ENCODE measurements at regions of chr11 and their contacts with region 1.

Region 1: DNA sequence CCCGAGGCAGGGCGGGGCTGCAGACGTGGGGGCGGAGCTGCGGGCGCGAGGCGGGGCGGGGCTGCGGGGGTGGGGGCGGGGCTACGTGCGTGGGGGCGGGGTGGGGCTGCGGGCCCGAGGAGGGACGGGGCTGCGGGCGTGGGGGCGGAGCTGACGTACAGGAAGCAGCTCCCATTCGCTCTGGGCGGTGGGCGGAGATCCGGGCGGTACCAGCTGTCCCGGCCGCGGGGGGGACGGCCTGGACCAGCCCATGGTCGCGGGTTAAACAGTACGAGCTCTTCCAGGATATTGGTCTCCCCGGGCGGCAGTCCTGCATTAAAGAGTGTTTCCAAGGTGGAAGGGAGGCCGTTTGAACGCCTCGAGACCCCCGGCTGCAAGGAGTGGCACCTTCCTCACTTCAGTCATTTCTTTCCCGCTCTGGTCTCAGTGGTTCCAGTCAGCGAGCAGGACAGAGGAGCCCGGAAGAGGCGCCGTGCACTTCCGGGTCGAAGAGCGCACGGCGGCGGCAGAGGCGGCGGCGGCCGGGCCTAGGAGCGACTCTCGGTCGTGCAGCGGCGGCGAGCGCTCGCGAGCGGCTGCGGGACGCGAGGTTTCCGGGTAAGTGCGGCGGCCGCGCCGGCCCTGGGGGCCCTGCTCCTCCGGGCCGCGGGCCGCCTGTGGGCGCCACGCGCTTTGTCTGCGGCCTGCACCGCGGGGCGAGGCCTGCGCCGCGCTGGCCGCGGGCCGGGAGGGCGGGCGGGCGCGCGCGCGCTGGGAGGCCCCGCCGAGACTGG is at the start of gene PHRF1:
- DNase-seq: peak; percentile 91 to 97 (median 96)
- H3K4me3 ChIP-seq: peak within 1 kb of the TSS; percentile 91
- H3K4me3 Mint-ChIP-seq: peak within 1 kb of the TSS; percentile 95 to 99 (median 97)
- H3K27ac ChIP-seq: peak within 1 kb of the TSS; percentile 81
- H3K27ac Mint-ChIP-seq: peak within 1 kb of the TSS; percentile 95 to 99 (median 98)
- H3K4me1 ChIP-seq: peaks cover 40% of the 10 kb centered on the region
- H3K4me1 Mint-ChIP-seq: peaks cover 40 to 56% (median 51%) of the 10 kb centered on the region in 3 donors
- H3K27me3 ChIP-seq: no peaks in the 10 kb centered on the region
- H3K27me3 Mint-ChIP-seq: peaks cover 8% of the 10 kb centered on the region in 2 donors
- total RNA-seq, gene PHRF1: 47.3 to 49.8 TPM

Region 2: DNA sequence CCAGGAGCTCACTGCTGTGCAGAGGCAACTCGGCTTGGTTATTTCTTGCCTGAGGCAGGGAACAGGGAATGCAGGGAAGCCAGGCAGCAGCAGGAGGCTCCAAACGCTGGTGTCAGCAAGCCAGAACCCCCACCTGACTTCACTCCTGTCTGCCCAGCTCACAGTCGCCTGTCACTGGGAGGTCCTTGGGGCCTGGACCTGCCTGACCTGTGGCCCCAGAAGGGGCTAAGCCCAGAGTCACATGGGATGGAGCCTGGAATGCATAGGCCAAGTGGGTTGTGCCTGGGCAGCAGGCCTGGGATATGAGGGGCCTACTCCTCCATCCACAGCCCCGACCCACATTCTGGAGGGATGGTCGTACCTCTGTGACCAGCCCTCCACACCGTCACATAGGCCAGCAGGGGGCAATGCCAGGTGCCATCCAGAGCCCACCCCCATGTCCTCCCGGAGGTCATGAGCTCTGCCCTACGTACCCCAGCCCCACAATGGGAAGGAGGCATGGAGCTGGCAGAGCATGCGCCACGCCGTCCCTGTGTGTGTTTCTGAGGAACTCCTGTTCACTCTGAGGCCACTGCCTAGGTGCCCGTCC is 10.2 kb before region 1 on chr11:
- CTCF ChIA-PET with region 1: interaction called, 11 read pairs
- POLR2A ChIA-PET with region 1: interaction called, 5 read pairs
- DNase-seq: no peak
- H3K4me3 ChIP-seq: no peak overlapping the region
- H3K4me3 Mint-ChIP-seq: peak overlapping the region in 1 of 7 donors; percentile 74
- H3K27ac ChIP-seq: no peak overlapping the region
- H3K27ac Mint-ChIP-seq: no peak overlapping the region
- H3K4me1 ChIP-seq: peaks cover 19% of the 10 kb centered on the region
- H3K4me1 Mint-ChIP-seq: peaks cover 5 to 18% (median 7%) of the 10 kb centered on the region in 3 donors
- H3K27me3 ChIP-seq: no peaks in the 10 kb centered on the region
- H3K27me3 Mint-ChIP-seq: peaks cover 0 to 2% of the 10 kb centered on the region in 2 donors

Region 3: DNA sequence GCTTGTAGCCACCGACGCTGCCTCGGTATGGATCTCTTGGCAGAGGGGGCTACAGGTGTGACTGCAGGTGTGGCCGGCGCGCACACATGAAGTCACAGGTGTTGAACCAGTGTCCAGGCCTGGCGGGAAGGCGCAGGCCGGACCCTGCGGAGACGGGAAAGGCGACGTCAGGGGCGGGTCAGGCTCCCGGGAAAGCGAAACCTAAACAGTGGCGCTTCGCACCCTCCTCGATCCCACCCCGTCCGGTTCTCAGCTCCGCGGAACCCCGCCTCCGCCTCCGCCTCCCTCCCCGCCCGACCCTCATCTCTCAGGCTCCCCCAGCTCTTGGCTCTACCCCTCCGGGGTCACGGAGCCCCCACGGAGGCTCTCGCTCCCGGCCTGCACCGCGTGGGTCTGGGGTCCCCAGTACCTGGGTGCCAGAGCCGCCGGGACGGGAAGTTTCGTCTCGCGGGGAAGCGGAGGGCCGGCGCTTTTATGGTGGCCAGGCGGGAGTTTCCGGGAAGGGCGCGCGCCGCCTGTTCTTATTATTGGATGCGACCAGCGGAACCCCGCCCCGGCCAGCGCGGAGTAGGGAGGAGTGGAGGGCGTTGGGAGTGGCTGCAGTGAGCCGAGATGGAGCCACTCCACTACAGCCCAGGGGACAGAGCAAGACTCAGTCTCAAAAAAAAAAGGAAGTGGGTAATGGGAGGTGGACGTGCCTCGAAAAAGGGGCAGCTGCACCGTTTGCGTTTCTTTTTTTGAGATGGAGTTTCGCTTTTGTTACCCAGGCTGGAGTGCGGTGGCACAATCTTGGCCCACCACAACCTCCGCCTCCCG is 39.5 kb after region 1 on chr11 and contains the start of gene IRF7:
- CTCF ChIA-PET with region 1: interaction called, 3 read pairs
- POLR2A ChIA-PET with region 1: interaction called, 11 read pairs
- DNase-seq: peak; percentile 81 to 89 (median 86)
- H3K4me3 ChIP-seq: peak within 1 kb of the TSS; percentile 90
- H3K4me3 Mint-ChIP-seq: peak within 1 kb of the TSS; percentile 88 to 97 (median 93)
- H3K27ac ChIP-seq: peak within 1 kb of the TSS; percentile 87
- H3K27ac Mint-ChIP-seq: peak within 1 kb of the TSS; percentile 86 to 98 (median 92)
- H3K4me1 ChIP-seq: peaks cover 18% of the 10 kb centered on the region
- H3K4me1 Mint-ChIP-seq: peaks cover 0 to 29% (median 10%) of the 10 kb centered on the region in 3 donors
- H3K27me3 ChIP-seq: no peaks in the 10 kb centered on the region
- H3K27me3 Mint-ChIP-seq: no peaks in the 10 kb centered on the region
- total RNA-seq, gene IRF7: 16.4 to 18.0 TPM

Region 4: DNA sequence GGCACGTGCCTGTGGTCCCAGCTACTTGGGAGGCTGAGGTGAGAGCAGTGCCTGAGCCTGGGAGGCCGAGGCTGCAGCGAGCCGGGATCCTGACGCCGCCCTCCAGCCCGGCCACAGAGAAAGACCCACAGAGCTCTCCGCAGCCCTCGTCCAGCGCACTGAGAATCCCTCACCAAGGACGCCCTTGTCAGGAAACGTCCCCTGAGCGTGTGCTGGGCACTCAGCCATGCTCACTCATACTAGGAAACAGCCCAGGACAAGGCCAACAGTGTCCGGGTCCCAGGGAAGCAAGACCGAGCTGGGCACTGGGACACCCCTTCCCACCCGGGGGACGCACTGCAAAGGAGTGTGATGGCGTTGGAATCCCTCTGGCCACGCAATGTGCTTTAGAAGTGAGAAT is 104.3 kb after region 1 on chr11:
- CTCF ChIA-PET with region 1: no interaction called
- POLR2A ChIA-PET with region 1: no interaction called
- DNase-seq: no peak
- H3K4me3 ChIP-seq: no peak overlapping the region
- H3K4me3 Mint-ChIP-seq: no peak overlapping the region
- H3K27ac ChIP-seq: no peak overlapping the region
- H3K27ac Mint-ChIP-seq: peak overlapping the region in 1 of 8 donors; percentile 60
- H3K4me1 ChIP-seq: no peaks in the 10 kb centered on the region
- H3K4me1 Mint-ChIP-seq: peaks cover 0 to 13% (median 0%) of the 10 kb centered on the region in 3 donors
- H3K27me3 ChIP-seq: no peaks in the 10 kb centered on the region
- H3K27me3 Mint-ChIP-seq: no peaks in the 10 kb centered on the region

Measured in CD8-positive, alpha-beta memory T cell (primary cell).